ENCODE measurements at regions of chr9 and their contacts with region 1.

Region 1: GRCh38 chr9:136424750-136425362 is 14.4 kb downstream of the PMPCA start:
- DNase-seq: no peak
- ATAC-seq: no peak; the same call in 2 of the 3 replicates
- H3K4me3 ChIP-seq: no peak overlapping the region
- H3K27ac ChIP-seq: no peak overlapping the region
- H3K4me1 ChIP-seq: peaks cover 0 to 15% of the 10 kb centered on the region in 2 experiments; a peak in 2 of 5 replicates
- H3K27me3 ChIP-seq: no peaks in the 10 kb centered on the region
- CTCF ChIP-seq: no peak
- EP300 ChIP-seq: no peak
- POLR2A ChIP-seq: no peak
- RAD21 ChIP-seq: no peak

Region 2: DNA sequence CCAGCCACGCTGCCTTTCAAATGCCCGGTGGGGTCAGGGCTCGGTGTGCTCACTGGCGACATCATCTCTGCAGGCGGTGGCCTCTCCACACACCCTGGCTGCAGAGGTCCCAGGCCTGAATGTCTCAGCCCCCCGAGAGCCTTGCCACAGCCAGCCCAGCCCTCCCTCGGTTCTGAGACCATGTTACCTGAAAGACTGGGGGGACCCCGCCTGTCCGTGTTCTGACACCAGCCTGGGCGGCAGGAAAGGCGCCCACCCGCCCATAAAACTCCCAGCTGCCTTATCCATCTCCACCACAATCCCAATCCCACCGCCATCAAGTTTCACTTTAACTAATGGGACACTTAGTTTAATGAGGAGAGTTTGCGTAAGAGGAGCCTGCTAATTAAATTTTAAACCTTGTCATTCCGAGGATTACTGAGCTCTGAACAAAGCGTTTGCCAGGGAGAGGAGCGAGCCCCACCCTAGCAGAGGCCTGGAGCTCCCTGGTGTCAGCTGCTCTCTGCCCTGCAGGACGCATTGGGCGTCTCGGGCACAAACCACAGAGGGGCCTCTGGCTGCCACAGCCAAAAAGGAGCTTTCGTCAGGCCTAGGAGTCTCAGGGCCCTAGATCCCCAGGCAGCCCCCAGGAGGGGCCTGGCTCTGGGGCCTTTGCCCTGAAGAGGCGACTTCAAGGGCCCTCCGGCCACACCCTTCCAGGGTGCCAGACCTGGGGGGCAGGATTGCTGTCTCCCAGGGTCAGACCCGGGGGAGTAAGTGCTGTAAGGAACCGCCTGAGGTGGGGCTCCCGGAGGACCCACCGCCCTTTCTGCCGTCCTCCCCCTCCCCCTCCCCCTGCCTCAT is 235.2 kb before region 1 on chr9:
- CTCF ChIA-PET with region 1: no interaction called
- POLR2A ChIA-PET with region 1: no interaction called
- in situ Hi-C with region 1: no loop called
- intact Hi-C with region 1: no loop called
- DNase-seq: no peak
- ATAC-seq: no peak
- H3K4me3 ChIP-seq: no peak overlapping the region
- H3K27ac ChIP-seq: no peak overlapping the region
- H3K4me1 ChIP-seq: peaks cover 28 to 67% of the 10 kb centered on the region in 2 experiments
- H3K27me3 ChIP-seq: peaks cover 11 to 38% of the 10 kb centered on the region in 2 experiments; a peak in 4 of 5 replicates
- CTCF ChIP-seq: no peak
- EP300 ChIP-seq: no peak
- POLR2A ChIP-seq: no peak
- RAD21 ChIP-seq: no peak

Region 3: GRCh38 chr9:136412962-136413361 is 11.9 kb before region 1 on chr9:
- CTCF ChIA-PET with region 1: no interaction called
- POLR2A ChIA-PET with region 1: interaction called, 15 read pairs
- in situ Hi-C with region 1: no loop called
- intact Hi-C with region 1: no loop called
- DNase-seq: peak in 1 of 4 experiments; percentile 40
- ATAC-seq: no peak
- H3K4me3 ChIP-seq: no peak overlapping the region
- H3K27ac ChIP-seq: no peak overlapping the region
- H3K4me1 ChIP-seq: peaks cover 16 to 28% of the 10 kb centered on the region in 2 experiments; a peak in 4 of 5 replicates
- H3K27me3 ChIP-seq: no peaks in the 10 kb centered on the region
- CTCF ChIP-seq: no peak
- EP300 ChIP-seq: no peak
- POLR2A ChIP-seq: no peak
- RAD21 ChIP-seq: no peak

Region 4: GRCh38 chr9:136437472-136438288 is 12.8 kb after region 1 on chr9:
- CTCF ChIA-PET with region 1: no interaction called
- POLR2A ChIA-PET with region 1: interaction called, 33 read pairs
- in situ Hi-C with region 1: no loop called
- intact Hi-C with region 1: no loop called
- DNase-seq: peak in 1 of 4 experiments; percentile 33
- ATAC-seq: no peak
- H3K4me3 ChIP-seq: peak overlapping the region; percentile 92
- H3K27ac ChIP-seq: peak overlapping the region; percentile 33; the same call in 1 of the 3 replicates
- H3K4me1 ChIP-seq: peaks cover 21 to 64% of the 10 kb centered on the region in 2 experiments
- H3K27me3 ChIP-seq: no peaks in the 10 kb centered on the region
- CTCF ChIP-seq: no peak
- EP300 ChIP-seq: no peak
- POLR2A ChIP-seq: no peak
- RAD21 ChIP-seq: no peak